ENCODE measurements at regions of chr15 and their contacts with region 1.

Region 1: GRCh38 chr15:64571857-64572291 is 111.5 kb downstream of the ZNF609 start:
- DNase-seq: no peak
- ATAC-seq: peak; percentile 72
- H3K4me3 Mint-ChIP-seq: peak overlapping the region; percentile 42
- H3K27ac Mint-ChIP-seq: peak overlapping the region; percentile 89
- H3K4me1 Mint-ChIP-seq: peaks cover 72% of the 10 kb centered on the region
- H3K27me3 Mint-ChIP-seq: no peaks in the 10 kb centered on the region
- CTCF ChIP-seq: no peak

Region 2: GRCh38 chr15:64344651-64345294 is 227.1 kb before region 1 on chr15:
- CTCF ChIA-PET with region 1: no interaction called
- POLR2A ChIA-PET with region 1: no interaction called
- intact Hi-C with region 1: no loop called
- DNase-seq: no peak
- ATAC-seq: no peak
- H3K4me3 Mint-ChIP-seq: no peak overlapping the region
- H3K27ac Mint-ChIP-seq: no peak overlapping the region
- H3K4me1 Mint-ChIP-seq: peaks cover 5% of the 10 kb centered on the region
- H3K27me3 Mint-ChIP-seq: no peaks in the 10 kb centered on the region
- CTCF ChIP-seq: no peak

Region 3: DNA sequence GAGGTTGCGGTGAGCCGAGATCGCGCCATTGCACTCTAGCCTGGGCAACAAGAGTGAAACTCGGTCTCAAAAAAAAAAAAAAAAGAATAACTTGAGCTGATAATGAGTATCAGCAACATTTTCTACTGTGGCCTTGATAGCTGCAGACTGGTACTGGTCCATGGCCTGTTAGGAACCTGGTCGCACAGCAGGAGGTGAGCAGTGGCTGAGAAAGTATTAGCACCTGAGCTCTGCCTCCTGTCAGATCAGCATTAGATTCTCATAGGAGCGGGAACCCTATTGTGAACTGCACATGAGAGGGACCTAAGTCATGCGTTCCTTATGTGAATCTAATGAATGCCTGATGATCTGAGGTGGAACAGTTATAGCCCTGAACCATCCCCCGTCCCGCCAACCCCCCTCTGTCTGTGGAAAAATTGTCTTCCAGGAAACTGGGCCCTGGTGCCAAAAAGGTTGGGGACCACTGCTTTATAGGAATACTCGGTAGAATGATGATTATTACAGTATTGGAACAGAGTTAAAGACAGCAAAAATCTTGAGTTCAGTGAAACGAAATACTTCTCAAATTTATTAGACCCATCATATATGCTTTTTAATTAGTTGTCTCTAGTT is 14.5 kb after region 1 on chr15:
- CTCF ChIA-PET with region 1: no interaction called
- POLR2A ChIA-PET with region 1: interaction called, 16 read pairs
- intact Hi-C with region 1: no loop called
- DNase-seq: no peak
- ATAC-seq: no peak
- H3K4me3 Mint-ChIP-seq: no peak overlapping the region
- H3K27ac Mint-ChIP-seq: no peak overlapping the region
- H3K4me1 Mint-ChIP-seq: peaks cover 20% of the 10 kb centered on the region
- H3K27me3 Mint-ChIP-seq: no peaks in the 10 kb centered on the region
- CTCF ChIP-seq: no peak

Region 4: DNA sequence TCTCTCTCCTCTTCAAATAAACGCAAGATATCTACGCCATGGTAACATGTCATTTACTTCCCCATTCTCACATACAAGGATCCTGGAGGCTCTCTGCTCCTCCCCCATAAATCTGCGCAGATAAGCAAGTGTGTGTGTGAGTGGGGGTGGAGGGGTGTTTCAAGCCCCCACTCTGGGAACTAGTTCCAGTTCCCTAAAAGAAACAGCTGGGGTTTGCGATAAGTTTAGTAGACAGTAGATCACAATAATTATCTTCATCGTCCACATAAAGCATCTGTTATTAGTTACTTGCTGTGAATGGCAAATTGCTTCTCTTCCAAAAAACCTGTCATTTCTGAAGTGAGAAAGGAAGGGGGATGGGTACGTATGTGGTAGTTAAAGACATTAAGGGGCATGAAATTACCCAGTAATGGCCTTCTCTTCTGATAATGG is 123.7 kb after region 1 on chr15:
- CTCF ChIA-PET with region 1: no interaction called
- POLR2A ChIA-PET with region 1: no interaction called
- intact Hi-C with region 1: no loop called
- DNase-seq: peak; percentile 23
- ATAC-seq: peak; percentile 93
- H3K4me3 Mint-ChIP-seq: peak overlapping the region; percentile 40
- H3K27ac Mint-ChIP-seq: peak overlapping the region; percentile 83
- H3K4me1 Mint-ChIP-seq: peaks cover 73% of the 10 kb centered on the region
- H3K27me3 Mint-ChIP-seq: no peaks in the 10 kb centered on the region
- CTCF ChIP-seq: no peak